CD4-positive, alpha-beta T cell (primary cell): ENCODE measurements at regions of chr13 and their contacts with region 1.

Region 1: DNA sequence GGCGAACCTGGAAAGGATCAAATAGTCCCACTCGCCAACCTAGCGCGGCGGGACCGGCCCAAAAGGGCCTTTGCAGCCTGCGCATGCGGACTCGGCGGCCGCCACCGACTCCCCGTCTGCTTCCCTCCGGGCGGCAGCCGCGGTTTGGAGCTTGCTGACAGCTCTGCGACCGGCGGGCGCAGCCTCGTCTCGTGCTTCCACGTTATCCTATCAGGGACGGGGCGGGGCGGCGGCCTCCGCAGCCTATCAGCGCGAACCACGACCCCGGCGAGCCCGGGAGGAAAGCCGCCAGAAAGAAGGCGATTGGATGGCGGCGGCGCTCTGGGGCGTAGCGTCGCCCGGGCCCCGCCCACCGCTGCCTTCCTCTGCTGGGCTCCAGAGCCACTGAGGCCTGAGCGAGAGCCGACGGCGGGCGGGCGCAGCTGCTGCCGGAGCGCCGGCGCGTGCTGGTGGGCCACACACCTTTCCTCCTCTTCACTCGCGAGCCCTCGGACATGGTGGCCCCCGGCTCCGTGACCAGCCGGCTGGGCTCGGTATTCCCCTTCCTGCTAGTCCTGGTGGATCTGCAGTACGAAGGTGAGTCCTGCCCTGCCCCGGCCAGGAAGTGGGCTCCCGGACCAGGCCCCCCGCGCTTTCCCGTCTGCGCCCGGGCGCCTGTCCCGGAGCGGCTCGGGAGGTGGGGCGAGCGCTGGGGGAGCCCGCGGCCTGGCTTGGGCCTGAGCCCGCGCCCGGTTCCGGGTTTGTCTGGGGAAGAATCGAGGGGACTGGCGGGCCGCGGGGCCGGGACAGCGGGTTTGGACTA is at the start of gene DNAJC3:
- DNase-seq: peak; percentile 95 to 99 (median 98)
- ATAC-seq: peak; percentile 94
- H3K4me3 ChIP-seq: peak within 1 kb of the TSS; percentile 92
- H3K4me3 Mint-ChIP-seq: peak within 1 kb of the TSS; percentile 91
- H3K27ac ChIP-seq: peak within 1 kb of the TSS; percentile 61 to 76
- H3K27ac Mint-ChIP-seq: peak within 1 kb of the TSS; percentile 89
- H3K4me1 ChIP-seq: peaks cover 21% of the 10 kb centered on the region
- H3K4me1 Mint-ChIP-seq: peaks cover 79% of the 10 kb centered on the region
- H3K27me3 ChIP-seq: no peaks in the 10 kb centered on the region
- H3K27me3 Mint-ChIP-seq: no peaks in the 10 kb centered on the region
- CTCF ChIP-seq: no peak
- total RNA-seq, gene DNAJC3: 17.6 to 17.7 TPM

Region 2: GRCh38 chr13:94327318-94327717 is 1349.6 kb before region 1 on chr13:
- CTCF ChIA-PET with region 1: no interaction called
- POLR2A ChIA-PET with region 1: interaction called, 3 read pairs
- intact Hi-C with region 1: loop called in 1 of 2 experiments (anchors 10 kb)
- DNase-seq: peak in 4 of 14 experiments; percentile 20 to 59 (median 40)
- ATAC-seq: no peak
- H3K4me3 ChIP-seq: peak overlapping the region; percentile 18
- H3K4me3 Mint-ChIP-seq: peak overlapping the region; percentile 39
- H3K27ac ChIP-seq: no peak overlapping the region
- H3K27ac Mint-ChIP-seq: peak overlapping the region; percentile 38
- H3K4me1 ChIP-seq: peaks cover 76% of the 10 kb centered on the region
- H3K4me1 Mint-ChIP-seq: peaks cover 80% of the 10 kb centered on the region
- H3K27me3 ChIP-seq: no peaks in the 10 kb centered on the region
- H3K27me3 Mint-ChIP-seq: peaks cover 28% of the 10 kb centered on the region
- CTCF ChIP-seq: no peak

Region 3: GRCh38 chr13:94595950-94596574 is 1080.9 kb before region 1 on chr13 and contains the start of gene TGDS:
- CTCF ChIA-PET with region 1: no interaction called
- POLR2A ChIA-PET with region 1: interaction called, 4 read pairs
- intact Hi-C with region 1: loop called in 1 of 2 experiments (anchors 10 kb)
- DNase-seq: peak; percentile 69 to 95 (median 83)
- ATAC-seq: peak; percentile 98
- H3K4me3 ChIP-seq: peak within 1 kb of the TSS; percentile 74
- H3K4me3 Mint-ChIP-seq: peak within 1 kb of the TSS; percentile 92
- H3K27ac ChIP-seq: peak within 1 kb of the TSS; percentile 59 to 68
- H3K27ac Mint-ChIP-seq: peak within 1 kb of the TSS; percentile 76
- H3K4me1 ChIP-seq: peaks cover 32% of the 10 kb centered on the region
- H3K4me1 Mint-ChIP-seq: peaks cover 38% of the 10 kb centered on the region
- H3K27me3 ChIP-seq: no peaks in the 10 kb centered on the region
- H3K27me3 Mint-ChIP-seq: no peaks in the 10 kb centered on the region
- CTCF ChIP-seq: no peak
- total RNA-seq, gene TGDS: 4.1 to 4.6 TPM

Region 4: GRCh38 chr13:95723438-95723837 is 46.5 kb after region 1 on chr13:
- CTCF ChIA-PET with region 1: no interaction called
- POLR2A ChIA-PET with region 1: no interaction called
- intact Hi-C with region 1: loop called in 1 of 2 experiments (anchors 10 kb)
- DNase-seq: no peak
- ATAC-seq: no peak
- H3K4me3 ChIP-seq: no peak overlapping the region
- H3K4me3 Mint-ChIP-seq: no peak overlapping the region
- H3K27ac ChIP-seq: no peak overlapping the region
- H3K27ac Mint-ChIP-seq: peak overlapping the region; percentile 26
- H3K4me1 ChIP-seq: no peaks in the 10 kb centered on the region
- H3K4me1 Mint-ChIP-seq: peaks cover 38% of the 10 kb centered on the region
- H3K27me3 ChIP-seq: no peaks in the 10 kb centered on the region
- H3K27me3 Mint-ChIP-seq: no peaks in the 10 kb centered on the region
- CTCF ChIP-seq: no peak

Region 5: GRCh38 chr13:95779522-95779921 is 102.6 kb after region 1 on chr13:
- CTCF ChIA-PET with region 1: no interaction called
- POLR2A ChIA-PET with region 1: no interaction called
- intact Hi-C with region 1: loop called in 1 of 2 experiments (anchors 5 kb)
- DNase-seq: no peak
- ATAC-seq: no peak
- H3K4me3 ChIP-seq: no peak overlapping the region
- H3K4me3 Mint-ChIP-seq: no peak overlapping the region
- H3K27ac ChIP-seq: no peak overlapping the region
- H3K27ac Mint-ChIP-seq: no peak overlapping the region
- H3K4me1 ChIP-seq: no peaks in the 10 kb centered on the region
- H3K4me1 Mint-ChIP-seq: peaks cover 2% of the 10 kb centered on the region
- H3K27me3 ChIP-seq: no peaks in the 10 kb centered on the region
- H3K27me3 Mint-ChIP-seq: no peaks in the 10 kb centered on the region
- CTCF ChIP-seq: no peak